ENCODE measurements at regions of chr11 and their contacts with region 1.

Region 1: GRCh38 chr11:33808228-33808828 is 34.0 kb upstream of the FBXO3 start:
- DNase-seq: peak; percentile 90
- ATAC-seq: peak; percentile 98
- H3K4me3 ChIP-seq: no peak overlapping the region
- H3K27ac ChIP-seq: no peak overlapping the region
- H3K4me1 ChIP-seq: peaks cover 12% of the 10 kb centered on the region; the same call in 1 of the 2 replicates
- H3K27me3 ChIP-seq: no peaks in the 10 kb centered on the region
- CTCF ChIP-seq: peak; percentile 86

Region 2: GRCh38 chr11:33773987-33774735 is 34.2 kb before region 1 on chr11 and contains the start of gene FBXO3:
- CTCF ChIA-PET with region 1: interaction called, 4 read pairs
- POLR2A ChIA-PET with region 1: no interaction called
- intact Hi-C with region 1: loop called (anchors 5 kb)
- DNase-seq: peak; percentile 84
- ATAC-seq: peak; percentile 72
- H3K4me3 ChIP-seq: peak within 1 kb of the TSS; percentile 97
- H3K27ac ChIP-seq: peak within 1 kb of the TSS; percentile 19
- H3K4me1 ChIP-seq: peaks cover 47% of the 10 kb centered on the region
- H3K27me3 ChIP-seq: no peaks in the 10 kb centered on the region
- CTCF ChIP-seq: no peak
- total RNA-seq, gene FBXO3: 20.2 and 22.5 TPM in 2 replicates

Region 3: GRCh38 chr11:33829433-33830141 is 21.3 kb after region 1 on chr11:
- CTCF ChIA-PET with region 1: interaction called, 6 read pairs
- POLR2A ChIA-PET with region 1: no interaction called
- intact Hi-C with region 1: loop called (anchors 1 kb)
- DNase-seq: peak; percentile 83
- ATAC-seq: peak; percentile 70
- H3K4me3 ChIP-seq: peak overlapping the region; percentile 70
- H3K27ac ChIP-seq: no peak overlapping the region
- H3K4me1 ChIP-seq: peaks cover 27% of the 10 kb centered on the region
- H3K27me3 ChIP-seq: no peaks in the 10 kb centered on the region
- CTCF ChIP-seq: peak; percentile 87

Region 4: GRCh38 chr11:34308913-34309585 is 500.7 kb after region 1 on chr11:
- CTCF ChIA-PET with region 1: no interaction called
- POLR2A ChIA-PET with region 1: interaction called, 20 read pairs
- intact Hi-C with region 1: no loop called
- DNase-seq: no peak
- ATAC-seq: no peak
- H3K4me3 ChIP-seq: no peak overlapping the region
- H3K27ac ChIP-seq: no peak overlapping the region
- H3K4me1 ChIP-seq: peaks cover 16% of the 10 kb centered on the region
- H3K27me3 ChIP-seq: no peaks in the 10 kb centered on the region
- CTCF ChIP-seq: no peak

Measured in PC-3 (cell line).